Heart right ventricle (tissue), 16 donors: ENCODE measurements at regions of chr5 and their contacts with region 1.

Region 1: GRCh38 chr5:148730943-148731861 is 76.9 kb upstream of the HTR4 start:
- DNase-seq: peak in 1 of 2 donors; percentile 88
- ATAC-seq: peak; percentile 61 to 90 (median 87)
- H3K4me3 ChIP-seq: peak overlapping the region in 3 of 10 donors; percentile 13 to 31 (median 22)
- H3K27ac ChIP-seq: no peak overlapping the region
- H3K4me1 ChIP-seq: peaks cover 0 to 27% (median 6%) of the 10 kb centered on the region in 9 donors
- H3K27me3 ChIP-seq: no peaks in the 10 kb centered on the region
- CTCF ChIP-seq: peak; percentile 88 to 99 (median 95)

Region 2: GRCh38 chr5:147949711-147950573 is 781.3 kb before region 1 on chr5:
- intact Hi-C with region 1: loop called in 2 of 10 experiments (anchors 10 kb)
- DNase-seq: no peak
- ATAC-seq: peak in 1 of 8 donors; percentile 61
- H3K4me3 ChIP-seq: no peak overlapping the region
- H3K27ac ChIP-seq: no peak overlapping the region
- H3K4me1 ChIP-seq: peaks cover 0 to 1% (median 0%) of the 10 kb centered on the region in 9 donors
- H3K27me3 ChIP-seq: no peaks in the 10 kb centered on the region
- CTCF ChIP-seq: peak; percentile 38 to 83 (median 72)

Region 3: DNA sequence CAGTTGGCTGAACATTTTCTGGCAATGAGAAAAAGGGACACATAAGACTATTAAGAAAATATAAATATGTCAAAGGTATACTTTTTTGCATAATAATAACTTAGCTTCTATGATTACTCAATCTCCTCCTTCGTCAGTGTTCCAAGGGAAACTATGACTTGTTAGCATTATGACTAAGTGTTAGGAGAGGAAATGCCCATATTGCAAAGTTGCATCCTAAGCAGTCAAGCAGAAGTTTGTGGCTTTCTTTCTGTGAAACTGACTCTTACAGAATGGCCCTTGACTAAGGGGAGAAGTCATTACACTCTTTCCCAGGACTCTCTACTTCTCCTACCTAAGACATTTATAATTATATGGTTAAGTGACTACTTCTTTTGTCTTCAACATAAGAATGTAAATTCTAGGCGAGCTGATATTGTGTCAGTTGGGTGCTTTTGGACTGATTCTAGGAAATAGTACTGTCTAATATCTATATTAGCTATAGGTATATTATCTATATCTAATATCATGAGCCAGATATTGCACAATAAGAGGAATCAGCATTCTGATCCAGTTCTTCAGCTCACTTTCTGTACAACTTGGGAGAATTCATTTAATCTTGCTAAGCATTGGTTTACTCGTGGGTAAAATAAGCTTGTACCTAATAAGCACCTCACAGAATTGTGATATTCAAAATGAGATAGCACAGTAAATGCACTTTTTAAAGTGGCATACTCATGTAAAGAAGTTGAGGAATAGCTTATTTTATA is 544.8 kb before region 1 on chr5:
- intact Hi-C with region 1: loop called in 3 of 10 experiments (anchors 2 to 10 kb)
- DNase-seq: no peak
- ATAC-seq: peak in 2 of 8 donors; percentile 59 to 77
- H3K4me3 ChIP-seq: no peak overlapping the region
- H3K27ac ChIP-seq: peak overlapping the region in 2 of 10 donors; percentile 0 to 84
- H3K4me1 ChIP-seq: peaks cover 0 to 21% (median 0%) of the 10 kb centered on the region in 9 donors
- H3K27me3 ChIP-seq: no peaks in the 10 kb centered on the region
- CTCF ChIP-seq: no peak

Region 4: DNA sequence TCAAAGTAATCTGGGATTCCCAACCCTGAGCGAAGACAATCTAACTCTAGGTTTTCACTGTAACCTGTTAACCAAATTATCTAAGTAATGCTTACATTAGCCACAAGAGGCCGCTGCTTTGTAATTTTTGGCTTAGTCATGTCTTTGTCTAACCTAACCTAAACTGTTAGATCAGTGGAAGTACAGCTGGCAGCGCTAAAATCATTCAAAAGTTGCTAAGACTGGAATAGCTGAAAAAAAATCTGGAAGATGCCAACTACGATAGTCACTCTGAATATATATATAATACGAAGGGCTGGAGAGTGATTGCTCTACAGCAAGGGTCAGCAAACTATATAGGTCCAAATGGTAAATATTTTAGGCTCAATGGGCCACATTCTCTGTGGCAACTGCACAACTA is 287.2 kb before region 1 on chr5:
- intact Hi-C with region 1: loop called in 9 of 10 experiments (anchors 1 to 5 kb)
- DNase-seq: peak in 1 of 2 donors; percentile 73
- ATAC-seq: peak; percentile 71 to 86 (median 80)
- H3K4me3 ChIP-seq: no peak overlapping the region
- H3K27ac ChIP-seq: peak overlapping the region in 2 of 10 donors; percentile 13 to 33
- H3K4me1 ChIP-seq: peaks cover 0 to 32% (median 3%) of the 10 kb centered on the region in 9 donors
- H3K27me3 ChIP-seq: no peaks in the 10 kb centered on the region
- CTCF ChIP-seq: peak; percentile 48 to 84 (median 77)

Region 5: GRCh38 chr5:148963664-148964063 is 232.5 kb after region 1 on chr5:
- intact Hi-C with region 1: loop called in 2 of 10 experiments (anchors 5 kb)
- DNase-seq: no peak
- ATAC-seq: no peak
- H3K4me3 ChIP-seq: no peak overlapping the region
- H3K27ac ChIP-seq: peak overlapping the region in 1 of 10 donors; percentile 82
- H3K4me1 ChIP-seq: peaks cover 3 to 41% (median 7%) of the 10 kb centered on the region in 9 donors
- H3K27me3 ChIP-seq: no peaks in the 10 kb centered on the region
- CTCF ChIP-seq: no peak

Region 6: GRCh38 chr5:149035372-149035790 is 304.2 kb after region 1 on chr5:
- intact Hi-C with region 1: loop called in 8 of 10 experiments (anchors 1 to 10 kb)
- DNase-seq: peak; percentile 70 to 81
- ATAC-seq: peak; percentile 83 to 94 (median 91)
- H3K4me3 ChIP-seq: no peak overlapping the region
- H3K27ac ChIP-seq: no peak overlapping the region
- H3K4me1 ChIP-seq: peaks cover 0 to 53% (median 25%) of the 10 kb centered on the region in 9 donors
- H3K27me3 ChIP-seq: no peaks in the 10 kb centered on the region
- CTCF ChIP-seq: peak; percentile 64 to 95 (median 90)